Naive thymus-derived CD4-positive, alpha-beta T cell (primary cell): ENCODE measurements at regions of chr3 and their contacts with region 1.

Region 1: GRCh38 chr3:71725279-71725991 is at the start of gene EIF4E3:
- DNase-seq: peak in 5 of 9 donors; percentile 14 to 72 (median 33)
- ATAC-seq: peak; percentile 61
- H3K4me3 ChIP-seq: peak within 1 kb of the TSS; percentile 81
- H3K4me3 Mint-ChIP-seq: peak within 1 kb of the TSS; percentile 85 to 99 (median 95)
- H3K27ac ChIP-seq: peak within 1 kb of the TSS; percentile 76
- H3K27ac Mint-ChIP-seq: peak within 1 kb of the TSS; percentile 84 to 98 (median 96)
- H3K4me1 ChIP-seq: peaks cover 51 to 60% of the 10 kb centered on the region in 2 donors
- H3K4me1 Mint-ChIP-seq: peaks cover 60 to 81% (median 76%) of the 10 kb centered on the region in 7 donors
- H3K27me3 ChIP-seq: no peaks in the 10 kb centered on the region
- H3K27me3 Mint-ChIP-seq: no peaks in the 10 kb centered on the region
- total RNA-seq, gene EIF4E3: 28.5 to 72.8 (median 39.2) TPM

Region 2: GRCh38 chr3:70943886-70944285 is 781.5 kb before region 1 on chr3:
- CTCF ChIA-PET with region 1: no interaction called
- POLR2A ChIA-PET with region 1: no interaction called
- intact Hi-C with region 1: no loop called
- DNase-seq: no peak
- ATAC-seq: no peak
- H3K4me3 ChIP-seq: no peak overlapping the region
- H3K4me3 Mint-ChIP-seq: no peak overlapping the region
- H3K27ac ChIP-seq: no peak overlapping the region
- H3K27ac Mint-ChIP-seq: no peak overlapping the region
- H3K4me1 ChIP-seq: no peaks in the 10 kb centered on the region
- H3K4me1 Mint-ChIP-seq: no peaks in the 10 kb centered on the region
- H3K27me3 ChIP-seq: peaks cover 0 to 3% of the 10 kb centered on the region in 2 donors
- H3K27me3 Mint-ChIP-seq: peaks cover 13 to 41% (median 24%) of the 10 kb centered on the region in 5 donors

Region 3: GRCh38 chr3:71069797-71070196 is 655.6 kb before region 1 on chr3:
- CTCF ChIA-PET with region 1: no interaction called
- POLR2A ChIA-PET with region 1: no interaction called
- intact Hi-C with region 1: loop called (anchors 5 kb)
- DNase-seq: peak; percentile 26 to 72 (median 68)
- ATAC-seq: peak; percentile 60
- H3K4me3 ChIP-seq: no peak overlapping the region
- H3K4me3 Mint-ChIP-seq: peak overlapping the region in 7 of 10 donors; percentile 1 to 52 (median 37)
- H3K27ac ChIP-seq: peak overlapping the region; percentile 34
- H3K27ac Mint-ChIP-seq: peak overlapping the region in 8 of 9 donors; percentile 76 to 91 (median 84)
- H3K4me1 ChIP-seq: peaks cover 44 to 81% of the 10 kb centered on the region in 2 donors
- H3K4me1 Mint-ChIP-seq: peaks cover 55 to 90% (median 86%) of the 10 kb centered on the region in 7 donors
- H3K27me3 ChIP-seq: no peaks in the 10 kb centered on the region
- H3K27me3 Mint-ChIP-seq: no peaks in the 10 kb centered on the region

Region 4: GRCh38 chr3:71369701-71370391 is 355.6 kb before region 1 on chr3:
- CTCF ChIA-PET with region 1: no interaction called
- POLR2A ChIA-PET with region 1: no interaction called
- intact Hi-C with region 1: no loop called
- DNase-seq: no peak
- ATAC-seq: no peak
- H3K4me3 ChIP-seq: no peak overlapping the region
- H3K4me3 Mint-ChIP-seq: peak overlapping the region in 2 of 10 donors; percentile 12 to 73
- H3K27ac ChIP-seq: peak overlapping the region; percentile 88
- H3K27ac Mint-ChIP-seq: peak overlapping the region in 8 of 9 donors; percentile 88 to 100 (median 96)
- H3K4me1 ChIP-seq: peaks cover 19 to 78% of the 10 kb centered on the region in 2 donors
- H3K4me1 Mint-ChIP-seq: peaks cover 10 to 94% (median 89%) of the 10 kb centered on the region in 7 donors
- H3K27me3 ChIP-seq: no peaks in the 10 kb centered on the region
- H3K27me3 Mint-ChIP-seq: peaks cover 0 to 39% (median 0%) of the 10 kb centered on the region in 5 donors

Region 5: DNA sequence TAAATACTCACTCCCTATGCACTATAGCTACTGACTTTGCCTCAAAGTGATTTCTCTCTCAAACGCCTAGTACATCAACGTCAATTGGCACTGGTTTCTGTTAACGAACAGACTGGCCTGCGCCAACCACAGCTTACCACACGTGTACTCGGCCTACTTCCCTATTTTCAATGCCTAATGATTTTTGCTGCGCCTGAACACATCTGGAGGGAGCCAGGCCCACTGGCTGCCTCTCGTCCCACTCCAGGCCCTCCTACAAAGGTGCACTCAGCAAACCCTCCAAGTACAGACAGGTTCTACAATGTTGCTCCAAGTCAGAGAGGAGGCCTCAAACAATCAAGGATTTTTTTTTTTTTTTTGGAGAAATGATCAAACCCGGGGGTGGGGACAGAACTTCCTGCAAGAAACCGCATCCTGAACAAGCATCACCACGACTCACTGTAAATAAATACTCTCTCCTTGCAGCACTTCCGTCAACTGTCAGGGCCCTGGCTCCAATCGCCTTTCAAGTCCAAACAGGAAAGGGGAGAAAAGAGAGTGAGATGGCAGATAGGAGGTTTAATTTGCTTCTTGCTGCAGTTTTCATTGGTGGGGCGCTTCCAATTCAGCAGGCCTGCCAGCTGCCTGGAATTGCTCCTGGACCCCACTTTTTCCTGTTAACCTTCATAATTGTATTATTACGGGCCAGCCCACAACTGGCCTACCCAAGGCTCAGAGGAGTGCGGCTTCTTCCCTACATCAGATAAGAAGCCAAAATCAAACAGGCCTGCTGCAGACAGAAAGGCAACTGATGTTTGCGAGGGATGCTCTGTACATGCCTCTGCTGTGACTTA is 281.2 kb before region 1 on chr3:
- CTCF ChIA-PET with region 1: no interaction called
- POLR2A ChIA-PET with region 1: no interaction called
- intact Hi-C with region 1: loop called (anchors 10 kb)
- DNase-seq: peak; percentile 57 to 97 (median 94)
- ATAC-seq: peak; percentile 88
- H3K4me3 ChIP-seq: peak overlapping the region; percentile 12
- H3K4me3 Mint-ChIP-seq: peak overlapping the region; percentile 64 to 86 (median 77)
- H3K27ac ChIP-seq: peak overlapping the region; percentile 90
- H3K27ac Mint-ChIP-seq: peak overlapping the region; percentile 94 to 100 (median 99)
- H3K4me1 ChIP-seq: peaks cover 93 to 96% of the 10 kb centered on the region in 2 donors
- H3K4me1 Mint-ChIP-seq: peaks cover 70 to 100% (median 96%) of the 10 kb centered on the region in 7 donors
- H3K27me3 ChIP-seq: no peaks in the 10 kb centered on the region
- H3K27me3 Mint-ChIP-seq: peaks cover 0 to 2% (median 0%) of the 10 kb centered on the region in 5 donors

Region 6: DNA sequence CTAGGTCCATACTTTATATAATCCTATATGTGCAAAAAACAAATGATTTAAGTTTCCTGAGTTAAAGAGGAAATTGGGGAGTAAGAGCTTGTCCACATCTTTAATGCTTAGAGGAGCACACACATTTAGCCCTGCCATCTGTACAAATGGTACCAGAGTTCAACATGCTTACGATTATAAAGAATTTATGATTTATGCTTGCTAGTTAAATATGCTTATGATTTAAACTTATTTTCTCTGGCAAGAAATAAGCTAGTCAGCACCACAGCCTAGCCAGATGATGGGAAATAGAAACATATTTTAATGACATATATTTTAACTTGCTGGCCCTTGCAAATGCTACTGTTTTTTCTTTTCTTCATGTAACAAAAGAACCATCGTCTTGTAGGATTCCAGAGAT is 48.5 kb before region 1 on chr3:
- CTCF ChIA-PET with region 1: no interaction called
- POLR2A ChIA-PET with region 1: no interaction called
- intact Hi-C with region 1: no loop called
- DNase-seq: no peak
- ATAC-seq: no peak
- H3K4me3 ChIP-seq: no peak overlapping the region
- H3K4me3 Mint-ChIP-seq: no peak overlapping the region
- H3K27ac ChIP-seq: no peak overlapping the region
- H3K27ac Mint-ChIP-seq: peak overlapping the region in 1 of 9 donors; percentile 28
- H3K4me1 ChIP-seq: no peaks in the 10 kb centered on the region
- H3K4me1 Mint-ChIP-seq: peaks cover 0 to 21% (median 8%) of the 10 kb centered on the region in 7 donors
- H3K27me3 ChIP-seq: no peaks in the 10 kb centered on the region
- H3K27me3 Mint-ChIP-seq: no peaks in the 10 kb centered on the region

Region 7: DNA sequence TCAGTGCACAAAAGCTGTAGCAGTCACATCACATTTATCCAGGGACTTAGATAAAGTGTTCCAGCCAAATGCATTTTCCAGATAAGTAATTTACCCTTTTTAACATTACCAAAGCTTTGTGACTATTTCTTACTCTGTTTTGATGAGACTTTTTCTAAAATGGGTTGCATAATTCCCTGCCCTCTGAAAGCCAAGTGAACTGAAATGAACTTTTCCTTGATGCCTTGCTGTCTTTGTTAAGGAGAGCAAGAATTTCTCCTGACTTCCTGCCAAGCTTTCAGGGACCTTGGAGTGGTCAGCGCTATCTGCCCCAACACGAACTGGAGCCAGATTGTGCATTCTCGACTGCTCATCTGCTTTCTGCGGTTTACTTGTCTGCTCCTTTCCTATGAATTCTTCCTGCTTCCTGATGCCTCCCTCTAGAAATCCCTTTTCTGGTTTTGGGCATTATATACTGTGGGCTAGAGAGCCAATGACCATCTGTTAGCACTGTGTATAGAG is 35.0 kb before region 1 on chr3:
- CTCF ChIA-PET with region 1: no interaction called
- POLR2A ChIA-PET with region 1: no interaction called
- intact Hi-C with region 1: no loop called
- DNase-seq: no peak
- ATAC-seq: no peak
- H3K4me3 ChIP-seq: no peak overlapping the region
- H3K4me3 Mint-ChIP-seq: no peak overlapping the region
- H3K27ac ChIP-seq: no peak overlapping the region
- H3K27ac Mint-ChIP-seq: peak overlapping the region in 2 of 9 donors; percentile 51 to 71
- H3K4me1 ChIP-seq: no peaks in the 10 kb centered on the region
- H3K4me1 Mint-ChIP-seq: peaks cover 0 to 11% (median 4%) of the 10 kb centered on the region in 7 donors
- H3K27me3 ChIP-seq: no peaks in the 10 kb centered on the region
- H3K27me3 Mint-ChIP-seq: no peaks in the 10 kb centered on the region

Region 8: GRCh38 chr3:71710906-71711494 is 14.4 kb before region 1 on chr3:
- CTCF ChIA-PET with region 1: interaction called, 15 read pairs
- POLR2A ChIA-PET with region 1: interaction called, 7 read pairs
- intact Hi-C with region 1: loop called (anchors 1 kb)
- DNase-seq: peak in 7 of 9 donors; percentile 32 to 57 (median 40)
- ATAC-seq: peak; percentile 81
- H3K4me3 ChIP-seq: no peak overlapping the region
- H3K4me3 Mint-ChIP-seq: peak overlapping the region in 5 of 10 donors; percentile 6 to 48 (median 32)
- H3K27ac ChIP-seq: no peak overlapping the region
- H3K27ac Mint-ChIP-seq: peak overlapping the region in 8 of 9 donors; percentile 4 to 80 (median 62)
- H3K4me1 ChIP-seq: peaks cover 19 to 29% of the 10 kb centered on the region in 2 donors
- H3K4me1 Mint-ChIP-seq: peaks cover 40 to 91% (median 53%) of the 10 kb centered on the region in 7 donors
- H3K27me3 ChIP-seq: no peaks in the 10 kb centered on the region
- H3K27me3 Mint-ChIP-seq: no peaks in the 10 kb centered on the region

Region 9: DNA sequence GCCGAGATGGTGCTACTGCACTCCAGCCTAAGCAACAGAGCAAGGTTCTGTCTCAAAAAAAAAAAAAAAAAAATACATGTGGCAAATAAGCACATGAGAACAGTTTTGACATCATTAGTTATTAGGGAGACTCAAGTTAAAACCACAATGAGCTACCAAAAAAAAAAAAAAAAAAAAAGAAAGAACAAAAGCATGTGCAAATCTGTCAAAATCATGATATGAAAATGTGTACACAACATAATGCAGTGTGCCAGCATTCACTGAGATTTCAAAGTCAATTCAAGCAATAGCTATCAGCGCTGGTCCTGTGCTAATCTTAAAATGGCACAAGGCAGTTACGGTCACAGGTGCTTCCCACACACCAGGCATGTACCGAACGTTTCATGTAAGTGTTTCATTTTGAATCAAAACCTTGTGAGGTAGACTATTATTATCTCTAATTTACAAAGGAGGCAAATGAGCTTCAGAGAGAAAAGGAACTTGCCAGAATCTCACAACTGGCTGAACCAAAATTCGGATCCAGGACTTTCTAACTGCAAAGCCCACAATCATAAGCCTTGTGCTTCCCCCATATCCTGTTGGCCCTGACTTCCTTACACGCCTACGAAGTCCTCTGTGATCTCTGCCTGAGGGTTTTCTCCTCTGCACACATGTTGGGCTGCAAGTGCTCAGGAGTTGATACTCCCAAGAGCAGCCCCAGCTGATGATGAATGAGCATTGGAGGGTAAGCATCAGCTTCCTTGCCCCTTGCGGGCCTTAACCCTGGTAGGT is 259.6 kb after region 1 on chr3:
- CTCF ChIA-PET with region 1: no interaction called
- POLR2A ChIA-PET with region 1: no interaction called
- intact Hi-C with region 1: loop called in 1 of 2 experiments (anchors 10 kb)
- DNase-seq: peak in 4 of 9 donors; percentile 12 to 28 (median 20)
- ATAC-seq: peak; percentile 44
- H3K4me3 ChIP-seq: peak overlapping the region; percentile 13
- H3K4me3 Mint-ChIP-seq: peak overlapping the region in 9 of 10 donors; percentile 58 to 78 (median 70)
- H3K27ac ChIP-seq: no peak overlapping the region
- H3K27ac Mint-ChIP-seq: peak overlapping the region in 5 of 9 donors; percentile 1 to 78 (median 40)
- H3K4me1 ChIP-seq: peaks cover 0 to 10% of the 10 kb centered on the region in 2 donors
- H3K4me1 Mint-ChIP-seq: peaks cover 6 to 53% (median 13%) of the 10 kb centered on the region in 7 donors
- H3K27me3 ChIP-seq: no peaks in the 10 kb centered on the region
- H3K27me3 Mint-ChIP-seq: no peaks in the 10 kb centered on the region

Region 10: GRCh38 chr3:72756900-72757299 is 1031.5 kb after region 1 on chr3:
- CTCF ChIA-PET with region 1: no interaction called
- POLR2A ChIA-PET with region 1: no interaction called
- intact Hi-C with region 1: loop called in 1 of 2 experiments (anchors 2 kb)
- DNase-seq: peak in 8 of 9 donors; percentile 24 to 87 (median 83)
- ATAC-seq: peak; percentile 98
- H3K4me3 ChIP-seq: peak overlapping the region; percentile 37
- H3K4me3 Mint-ChIP-seq: peak overlapping the region; percentile 51 to 84 (median 76)
- H3K27ac ChIP-seq: peak overlapping the region; percentile 68
- H3K27ac Mint-ChIP-seq: peak overlapping the region; percentile 86 to 99 (median 97)
- H3K4me1 ChIP-seq: peaks cover 17 to 49% of the 10 kb centered on the region in 2 donors
- H3K4me1 Mint-ChIP-seq: peaks cover 28 to 89% (median 80%) of the 10 kb centered on the region in 7 donors
- H3K27me3 ChIP-seq: no peaks in the 10 kb centered on the region
- H3K27me3 Mint-ChIP-seq: no peaks in the 10 kb centered on the region

Region 11: DNA sequence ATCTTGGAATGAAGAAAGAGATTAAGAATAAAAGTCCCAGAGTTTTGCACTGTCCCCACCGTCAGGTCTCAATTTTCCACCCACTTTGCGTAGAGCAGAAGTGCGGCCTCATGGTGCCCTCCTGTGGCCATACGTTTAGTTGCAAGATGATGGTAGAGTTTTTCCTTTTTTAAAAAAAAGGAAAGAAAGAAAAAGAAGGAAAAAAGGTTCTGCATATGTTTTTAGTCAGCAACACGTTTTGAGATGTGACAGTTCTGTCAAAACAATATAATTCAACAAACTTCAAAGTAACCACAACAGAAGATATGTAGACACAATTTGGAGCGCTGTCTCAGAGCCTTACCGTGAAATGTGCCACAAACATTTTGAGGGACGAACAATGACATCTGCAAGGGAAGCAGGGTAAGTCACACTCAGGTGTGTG is 1360.6 kb after region 1 on chr3:
- CTCF ChIA-PET with region 1: no interaction called
- POLR2A ChIA-PET with region 1: no interaction called
- intact Hi-C with region 1: loop called in 1 of 2 experiments (anchors 5 kb)
- DNase-seq: peak; percentile 16 to 56 (median 43)
- ATAC-seq: peak; percentile 82
- H3K4me3 ChIP-seq: peak overlapping the region; percentile 11
- H3K4me3 Mint-ChIP-seq: peak overlapping the region in 8 of 10 donors; percentile 25 to 70 (median 57)
- H3K27ac ChIP-seq: no peak overlapping the region
- H3K27ac Mint-ChIP-seq: peak overlapping the region in 1 of 9 donors; percentile 42
- H3K4me1 ChIP-seq: peaks cover 0 to 8% of the 10 kb centered on the region in 2 donors
- H3K4me1 Mint-ChIP-seq: peaks cover 0 to 9% (median 7%) of the 10 kb centered on the region in 7 donors
- H3K27me3 ChIP-seq: no peaks in the 10 kb centered on the region
- H3K27me3 Mint-ChIP-seq: peaks cover 0 to 3% (median 0%) of the 10 kb centered on the region in 5 donors